MCF 10A (cell line): ENCODE measurements at regions of chr18 and their contacts with region 1.

Region 1: GRCh38 chr18:51498085-51498855 is 300.8 kb upstream of the MEX3C start:
- DNase-seq: no peak
- H3K4me3 Mint-ChIP-seq: no peak overlapping the region
- H3K27ac Mint-ChIP-seq: no peak overlapping the region
- H3K4me1 Mint-ChIP-seq: peaks cover 19% of the 10 kb centered on the region
- H3K27me3 Mint-ChIP-seq: no peaks in the 10 kb centered on the region
- CTCF ChIP-seq: no peak

Region 2: GRCh38 chr18:51513541-51513940 is 15.3 kb after region 1 on chr18:
- CTCF ChIA-PET with region 1: interaction called, 3 read pairs
- POLR2A ChIA-PET with region 1: interaction called, 9 read pairs
- intact Hi-C with region 1: loop called (anchors 2 kb)
- DNase-seq: peak; percentile 86
- H3K4me3 Mint-ChIP-seq: no peak overlapping the region
- H3K27ac Mint-ChIP-seq: peak overlapping the region; percentile 72
- H3K4me1 Mint-ChIP-seq: peaks cover 26% of the 10 kb centered on the region
- H3K27me3 Mint-ChIP-seq: no peaks in the 10 kb centered on the region
- CTCF ChIP-seq: no peak